ENCODE measurements at regions of chr12 and their contacts with region 1.

Region 1: GRCh38 chr12:122225683-122226407 is at the start of gene DIABLO:
- DNase-seq: peak; percentile 100
- H3K4me3 Mint-ChIP-seq: peak within 1 kb of the TSS; percentile 91
- H3K27ac Mint-ChIP-seq: peak within 1 kb of the TSS; percentile 90
- H3K4me1 Mint-ChIP-seq: peaks cover 32% of the 10 kb centered on the region
- H3K27me3 Mint-ChIP-seq: no peaks in the 10 kb centered on the region
- total RNA-seq, gene DIABLO: 58.1 and 59.2 TPM in 2 replicates

Region 2: DNA sequence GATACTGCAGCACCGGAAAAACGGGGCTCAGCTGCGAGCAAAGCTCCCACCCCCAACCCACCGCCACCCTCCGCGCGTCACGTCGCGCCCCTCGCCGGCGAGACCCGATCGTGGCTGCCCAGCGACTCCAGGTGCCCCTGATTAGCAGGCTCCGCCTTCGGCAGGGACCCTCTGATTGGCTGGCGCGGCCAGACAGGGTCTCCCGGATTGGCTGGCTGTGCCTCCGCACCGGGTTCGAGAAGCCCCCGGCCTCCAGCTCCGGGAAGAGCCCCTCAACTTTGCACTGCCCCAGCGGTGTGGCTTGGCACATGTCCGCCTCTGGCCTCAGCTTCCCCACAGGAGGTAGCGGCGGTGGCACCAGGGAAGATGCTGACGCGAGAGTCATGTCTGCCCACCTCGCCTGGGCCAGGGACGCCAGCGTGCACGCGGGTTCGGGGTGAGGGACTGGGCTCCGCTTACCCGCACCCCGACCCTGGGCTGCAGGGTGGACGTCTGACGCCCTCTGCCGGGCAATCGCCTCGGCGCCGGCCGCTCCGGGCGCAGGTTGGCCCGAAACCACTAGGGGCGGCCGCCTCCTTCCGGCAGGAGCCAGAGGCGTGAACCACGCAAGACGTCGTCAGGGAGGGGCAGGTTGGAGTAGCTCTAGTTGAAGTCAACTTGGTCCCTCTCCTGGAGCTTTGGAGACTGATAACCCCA is 431.9 kb before region 1 on chr12:
- intact Hi-C with region 1: loop called (anchors 5 kb)
- DNase-seq: peak; percentile 95
- H3K4me3 Mint-ChIP-seq: peak overlapping the region; percentile 96
- H3K27ac Mint-ChIP-seq: peak overlapping the region; percentile 91
- H3K4me1 Mint-ChIP-seq: peaks cover 61% of the 10 kb centered on the region
- H3K27me3 Mint-ChIP-seq: no peaks in the 10 kb centered on the region

Region 3: GRCh38 chr12:122054842-122055520 is 170.9 kb before region 1 on chr12:
- intact Hi-C with region 1: loop called (anchors 1 kb)
- DNase-seq: no peak
- H3K4me3 Mint-ChIP-seq: no peak overlapping the region
- H3K27ac Mint-ChIP-seq: no peak overlapping the region
- H3K4me1 Mint-ChIP-seq: no peaks in the 10 kb centered on the region
- H3K27me3 Mint-ChIP-seq: no peaks in the 10 kb centered on the region

Region 4: DNA sequence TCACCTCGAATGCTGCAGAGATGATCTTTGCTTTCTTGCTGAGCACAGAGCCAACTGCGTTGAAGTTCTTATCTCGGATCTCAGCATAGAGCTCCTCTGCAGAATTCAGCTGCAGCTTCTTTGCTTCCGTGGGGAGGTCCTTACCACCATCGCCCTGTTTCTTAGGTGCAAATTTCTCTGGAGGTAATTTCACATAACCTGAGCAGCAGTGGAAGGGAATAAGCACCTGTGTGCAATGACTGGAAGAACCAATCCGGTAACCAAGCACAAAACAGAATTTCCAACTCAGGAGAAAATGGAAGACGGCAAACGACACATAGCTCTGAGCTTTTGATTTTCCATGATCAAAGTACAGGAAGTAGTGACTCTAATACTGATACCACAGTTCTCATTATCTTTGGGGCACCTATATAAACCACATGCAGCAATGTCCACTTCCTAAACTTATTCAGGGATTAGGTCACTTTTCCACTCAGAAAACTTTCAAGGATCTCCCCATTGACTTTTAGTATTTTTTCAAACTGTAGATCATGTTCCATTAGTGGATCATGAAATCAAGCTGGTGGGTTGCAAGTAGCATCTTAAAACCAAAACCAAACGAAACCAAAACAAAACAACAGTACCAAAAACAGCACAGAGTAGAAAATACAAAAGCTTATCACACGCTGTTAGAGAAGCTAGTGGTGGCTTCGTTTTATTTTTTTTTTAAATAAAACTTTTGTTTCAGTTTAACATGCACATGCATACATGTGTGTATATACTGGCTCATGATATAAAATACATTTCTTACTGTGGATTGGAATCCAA is 18.9 kb after region 1 on chr12:
- intact Hi-C with region 1: loop called (anchors 2 kb)
- DNase-seq: no peak
- H3K4me3 Mint-ChIP-seq: peak overlapping the region; percentile 82
- H3K27ac Mint-ChIP-seq: peak overlapping the region; percentile 94
- H3K4me1 Mint-ChIP-seq: peaks cover 22% of the 10 kb centered on the region
- H3K27me3 Mint-ChIP-seq: no peaks in the 10 kb centered on the region

Region 5: DNA sequence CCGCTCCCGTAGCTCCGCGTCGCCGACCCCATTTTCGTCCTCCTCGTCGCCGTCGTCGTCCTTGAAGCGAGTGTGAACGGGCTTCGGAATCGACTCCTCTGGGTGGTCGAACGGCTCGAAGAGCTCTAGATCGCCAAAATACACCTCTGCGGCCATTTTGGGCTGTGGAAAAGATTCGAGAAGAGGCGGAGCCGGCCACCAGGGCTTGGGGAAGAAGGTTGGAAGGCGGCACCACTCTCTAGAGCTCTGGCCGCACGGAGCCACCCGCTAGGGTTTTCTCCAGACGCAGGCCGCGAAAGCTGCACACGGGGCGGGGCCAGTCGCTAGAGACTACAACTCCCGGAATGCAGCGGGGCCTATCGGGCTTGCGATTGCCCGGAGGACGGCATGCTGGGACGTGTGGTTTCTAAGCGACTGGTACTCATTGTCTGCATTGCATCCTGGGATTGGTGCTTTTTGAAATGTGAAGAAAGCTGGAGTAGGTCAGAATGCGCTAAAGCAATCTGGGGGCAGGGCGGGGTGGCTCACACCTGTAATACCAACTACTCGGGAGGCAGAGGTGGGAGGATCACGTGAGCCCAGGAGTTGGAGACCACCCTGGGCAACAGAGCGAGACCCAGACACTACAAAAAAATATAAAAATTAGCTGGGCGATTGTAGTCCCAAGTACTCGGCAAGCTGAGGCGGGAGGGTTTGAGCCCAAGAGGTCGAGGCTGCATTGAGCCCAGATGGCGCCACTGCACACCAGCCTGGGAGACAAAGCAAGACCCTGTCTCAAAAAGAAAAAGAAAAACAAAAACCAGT is 275.0 kb after region 1 on chr12 and contains the start of gene ZCCHC8:
- intact Hi-C with region 1: loop called (anchors 1 kb)
- DNase-seq: peak; percentile 96
- H3K4me3 Mint-ChIP-seq: peak within 1 kb of the TSS; percentile 92
- H3K27ac Mint-ChIP-seq: peak within 1 kb of the TSS; percentile 92
- H3K4me1 Mint-ChIP-seq: peaks cover 31% of the 10 kb centered on the region
- H3K27me3 Mint-ChIP-seq: no peaks in the 10 kb centered on the region
- total RNA-seq, gene ZCCHC8: 42.5 and 48.4 TPM in 2 replicates

Region 6: DNA sequence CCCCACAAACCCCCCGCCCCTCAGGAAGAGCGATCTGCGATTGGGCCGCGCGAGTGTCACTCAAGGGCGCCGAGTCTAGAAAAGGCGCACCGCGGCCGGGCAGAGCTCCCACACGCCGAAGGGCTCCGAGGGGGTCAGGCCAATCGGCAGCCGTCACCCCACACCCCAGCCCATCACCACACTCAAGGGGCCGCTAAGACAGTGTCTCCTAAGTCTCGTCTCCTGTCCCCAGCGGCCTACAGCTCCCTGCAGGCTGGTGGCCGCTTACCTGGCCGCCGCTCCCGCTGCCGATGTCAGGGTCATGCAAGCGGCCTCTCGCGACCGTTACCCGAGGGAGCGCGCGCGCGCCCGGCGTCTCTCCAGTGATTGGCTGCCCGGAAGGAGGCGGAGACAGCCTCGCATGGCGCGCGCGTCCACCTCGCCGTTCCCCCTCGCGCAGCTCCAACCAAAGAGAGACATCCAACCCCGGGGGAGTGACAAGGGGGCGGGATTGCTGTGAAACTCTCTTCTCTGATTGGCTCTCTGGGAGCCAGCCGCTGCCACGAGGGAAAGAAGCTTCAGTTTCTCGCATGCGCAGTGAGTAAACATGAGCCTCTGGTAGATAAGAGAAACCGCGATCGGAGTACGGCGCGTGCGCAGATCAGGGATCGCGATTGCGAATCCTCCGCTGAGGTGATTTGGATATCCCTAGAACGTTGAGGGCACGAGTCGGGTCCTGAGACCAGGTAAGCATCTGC is 1007.1 kb after region 1 on chr12 and contains the starts of genes MPHOSPH9 and MTRFR:
- intact Hi-C with region 1: loop called (anchors 10 kb)
- DNase-seq: peak; percentile 99
- H3K4me3 Mint-ChIP-seq: peak within 1 kb of the TSS; percentile 100
- H3K27ac Mint-ChIP-seq: peak within 1 kb of the TSS; percentile 99
- H3K4me1 Mint-ChIP-seq: peaks cover 68% of the 10 kb centered on the region
- H3K27me3 Mint-ChIP-seq: peaks cover 2% of the 10 kb centered on the region
- total RNA-seq, gene MPHOSPH9: 87.3 and 89.9 TPM in 2 replicates
- total RNA-seq, gene MTRFR: 32.6 and 34.2 TPM in 2 replicates

Measured in activated T-helper 1 cell treated with anti-CD3 and anti-CD28 coated beads, Interleukin-12 subunit alpha, Interleukin-12 subunit beta, Interleukin-2, Interleukin-4 antibody, amounts not matched to agents 30 ng/mL and 10 ng/mL and 1 ng/mL, durations not matched to agents 14 hours and 24 hours and 36 hours (primary cell).